Gastrocnemius medialis (tissue), 4 donors: ENCODE measurements at regions of chr19 and their contacts with region 1.

Region 1: DNA sequence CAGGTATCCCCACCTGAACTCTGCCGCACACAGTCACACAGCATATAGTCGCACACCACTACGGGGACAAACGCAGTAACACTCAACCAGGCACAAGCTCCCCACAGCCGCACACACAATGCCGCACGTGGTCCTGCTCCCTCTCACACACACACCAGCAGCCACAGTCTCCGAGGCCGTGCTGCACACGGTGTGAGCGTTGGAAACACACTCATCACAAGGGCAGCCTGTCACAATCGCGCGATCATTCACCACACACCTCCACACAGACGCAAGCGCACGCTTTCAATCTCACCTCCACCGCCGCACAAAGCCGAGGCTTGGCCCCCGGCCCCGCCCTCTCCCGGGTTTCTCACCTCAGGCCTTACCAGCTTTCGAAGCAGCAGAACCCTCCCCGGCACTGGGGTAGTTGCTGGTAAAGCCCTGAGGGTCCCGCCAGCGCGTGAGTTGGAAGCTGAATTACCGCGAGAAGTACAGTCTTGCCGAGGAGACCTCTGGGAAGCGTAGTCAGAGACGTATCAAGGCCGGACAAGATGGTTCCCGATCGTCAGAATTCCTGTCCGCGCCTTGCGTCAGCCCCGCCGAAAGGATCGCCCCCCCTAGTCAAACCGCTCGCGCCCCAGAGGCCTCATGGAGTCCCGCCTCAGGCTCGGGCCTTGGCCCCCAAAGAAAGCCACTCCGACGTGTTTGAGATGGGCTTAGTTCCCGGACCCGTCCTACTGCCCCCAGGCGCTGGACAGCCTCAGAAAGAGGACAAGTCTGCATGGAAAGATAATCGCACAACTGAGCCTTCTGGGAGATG is at the start of gene ZNF566:
- DNase-seq: peak; percentile 75 to 89
- ATAC-seq: peak; percentile 99 to 100
- H3K4me3 ChIP-seq: peak within 1 kb of the TSS; percentile 76 to 98 (median 76)
- H3K27ac ChIP-seq: peak within 1 kb of the TSS; percentile 90 to 98 (median 91)
- H3K4me1 ChIP-seq: peaks cover 5 to 11% of the 10 kb centered on the region in 2 donors
- H3K27me3 ChIP-seq: no peaks in the 10 kb centered on the region
- CTCF ChIP-seq: no peak
- POLR2A ChIP-seq: peak; percentile 28 to 33
- total RNA-seq, gene ZNF566: 4.1 to 8.3 (median 5.9) TPM

Region 2: GRCh38 chr19:36378625-36379509 is 110.5 kb before region 1 on chr19 and contains the start of gene ZFP14:
- in situ Hi-C with region 1: no loop called
- intact Hi-C with region 1: loop called (anchors 1 kb)
- DNase-seq: peak; percentile 84 to 87
- ATAC-seq: peak; percentile 99
- H3K4me3 ChIP-seq: peak within 1 kb of the TSS; percentile 67 to 93 (median 84)
- H3K27ac ChIP-seq: peak within 1 kb of the TSS; percentile 72 to 84 (median 78)
- H3K4me1 ChIP-seq: peaks cover 11 to 17% of the 10 kb centered on the region in 2 donors
- H3K27me3 ChIP-seq: no peaks in the 10 kb centered on the region
- CTCF ChIP-seq: peak in 1 of 5 experiments; percentile 9
- POLR2A ChIP-seq: peak; percentile 39 to 53
- total RNA-seq, gene ZFP14: 0.67 to 1.9 (median 0.74) TPM

Region 3: GRCh38 chr19:36528194-36528920 is 39.0 kb after region 1 on chr19 and contains the start of gene ZNF260:
- in situ Hi-C with region 1: no loop called
- intact Hi-C with region 1: loop called (anchors 1 kb)
- DNase-seq: peak; percentile 96
- ATAC-seq: peak; percentile 99
- H3K4me3 ChIP-seq: peak within 1 kb of the TSS; percentile 71 to 83 (median 80)
- H3K27ac ChIP-seq: peak within 1 kb of the TSS; percentile 83 to 94 (median 90)
- H3K4me1 ChIP-seq: peaks cover 16 to 17% of the 10 kb centered on the region in 2 donors
- H3K27me3 ChIP-seq: no peaks in the 10 kb centered on the region
- CTCF ChIP-seq: no peak
- POLR2A ChIP-seq: peak; percentile 43 to 56
- total RNA-seq, gene ZNF260: 1.3 to 16.3 (median 3.2) TPM

Region 4: DNA sequence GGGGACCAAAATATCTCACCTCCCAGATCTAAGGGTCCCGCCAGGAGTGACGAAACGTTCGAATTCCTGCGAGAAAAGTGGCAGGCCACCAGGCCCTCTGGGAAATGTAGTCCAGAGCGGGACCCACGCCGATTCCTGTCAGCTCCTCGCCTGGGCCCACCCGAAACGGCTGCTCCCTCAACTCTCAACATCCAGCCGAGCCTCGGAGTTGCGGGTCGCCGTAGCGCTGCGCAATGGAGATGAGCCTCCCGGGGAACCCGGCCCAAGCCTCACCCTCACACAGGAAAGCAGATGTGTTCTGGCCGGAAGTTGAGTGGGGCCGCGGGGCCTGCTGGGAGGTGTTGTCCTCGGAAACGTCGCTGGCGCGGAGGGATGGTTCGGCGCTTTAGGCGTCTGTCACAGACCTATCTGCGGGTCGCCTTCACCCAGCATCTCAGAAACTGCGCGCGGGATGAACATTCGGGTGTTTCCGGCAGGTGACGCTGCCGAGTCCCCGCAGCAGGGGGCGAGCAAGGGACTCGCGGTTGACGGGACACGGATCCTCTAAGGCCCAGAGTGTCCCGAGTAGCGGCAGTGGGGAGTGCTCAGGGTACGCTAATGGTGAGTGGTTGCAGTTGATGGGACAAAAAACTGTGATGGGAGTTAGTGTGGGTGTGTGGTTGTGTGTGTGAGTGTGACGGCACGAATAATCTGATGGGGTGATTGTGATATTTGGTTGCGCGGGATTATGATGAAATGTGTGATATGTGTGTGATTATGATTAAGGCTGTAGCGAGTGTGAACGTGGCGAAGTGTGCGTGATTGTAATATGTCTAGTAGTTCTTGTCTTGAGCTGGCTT is 426.9 kb after region 1 on chr19 and contains the starts of genes ZNF568 and ZNF829:
- in situ Hi-C with region 1: no loop called
- intact Hi-C with region 1: loop called (anchors 5 kb)
- DNase-seq: peak; percentile 76 to 79
- ATAC-seq: peak; percentile 98
- H3K4me3 ChIP-seq: peak within 1 kb of the TSS; percentile 82 to 98 (median 83)
- H3K27ac ChIP-seq: peak within 1 kb of the TSS; percentile 92 to 97 (median 94)
- H3K4me1 ChIP-seq: peaks cover 8 to 12% of the 10 kb centered on the region in 2 donors
- H3K27me3 ChIP-seq: no peaks in the 10 kb centered on the region
- CTCF ChIP-seq: peak; percentile 32 to 64 (median 46)
- POLR2A ChIP-seq: peak in 1 of 2 donors; percentile 12
- total RNA-seq, gene ZNF568: 3.0 to 10.2 (median 5.4) TPM
- total RNA-seq, gene ZNF829: 0.97 to 1.5 (median 1.2) TPM

Region 5: GRCh38 chr19:37172368-37173366 is 683.3 kb after region 1 on chr19 and contains the start of gene ZNF585A:
- in situ Hi-C with region 1: no loop called
- intact Hi-C with region 1: loop called (anchors 1 kb)
- DNase-seq: peak; percentile 90 to 93
- ATAC-seq: peak; percentile 100
- H3K4me3 ChIP-seq: peak within 1 kb of the TSS; percentile 74 to 85 (median 80)
- H3K27ac ChIP-seq: peak within 1 kb of the TSS; percentile 80 to 90 (median 84)
- H3K4me1 ChIP-seq: peaks cover 7 to 12% of the 10 kb centered on the region in 2 donors
- H3K27me3 ChIP-seq: no peaks in the 10 kb centered on the region
- CTCF ChIP-seq: peak in 2 of 5 experiments; percentile 21 to 32
- POLR2A ChIP-seq: peak in 1 of 2 donors; percentile 14
- total RNA-seq, gene ZNF585A: 2.0 to 10.5 (median 6.0) TPM